ENCODE measurements at regions of chr5 and their contacts with region 1.

Region 1: DNA sequence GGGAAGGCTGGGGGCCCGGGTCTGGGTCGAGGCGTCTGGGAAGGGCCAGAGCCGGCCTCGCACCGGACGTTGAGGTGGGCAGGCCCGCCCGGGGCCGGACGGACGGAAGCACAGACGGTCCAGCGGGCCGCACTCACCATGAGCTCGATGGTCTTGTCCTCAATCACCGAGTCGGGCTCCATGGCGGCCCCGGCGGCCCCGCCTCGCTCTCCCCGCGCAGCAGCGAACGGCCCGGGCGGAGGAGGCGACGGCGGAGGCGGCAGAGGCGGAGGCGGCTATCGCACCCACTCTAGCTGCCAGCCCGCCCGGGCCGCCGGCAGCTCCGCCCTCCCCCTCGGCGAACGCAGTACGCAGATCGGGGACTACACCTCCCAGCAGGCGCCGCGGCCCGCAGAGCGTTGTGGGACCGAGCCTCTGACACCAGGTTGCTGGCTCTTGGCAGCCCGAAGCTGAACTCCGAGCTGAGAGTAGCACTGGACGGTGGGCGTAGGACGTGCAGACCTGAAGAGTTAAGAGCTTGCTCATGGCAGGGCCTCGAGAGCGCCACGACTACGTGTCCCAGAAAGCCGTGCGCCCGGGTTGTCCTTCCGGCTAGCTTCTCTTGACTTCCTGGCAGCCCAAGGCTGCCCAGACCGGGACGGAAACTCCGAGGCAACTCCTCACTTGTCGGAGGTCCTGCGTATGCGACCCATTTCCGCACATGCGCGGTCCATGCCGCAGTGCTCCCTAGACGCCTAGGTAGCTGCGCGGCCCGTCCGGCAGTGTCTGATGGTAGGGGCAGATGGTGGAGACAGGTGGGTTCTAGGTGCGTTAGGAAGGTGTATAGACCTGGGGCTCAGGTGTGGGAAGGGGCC is at the start of gene FBXW11:
- DNase-seq: peak; percentile 98
- H3K4me3 Mint-ChIP-seq: peak within 1 kb of the TSS; percentile 99
- H3K27ac Mint-ChIP-seq: peak within 1 kb of the TSS; percentile 99
- H3K4me1 Mint-ChIP-seq: peaks cover 46% of the 10 kb centered on the region
- H3K27me3 Mint-ChIP-seq: no peaks in the 10 kb centered on the region
- total RNA-seq, gene FBXW11: 53.3 and 54.4 TPM in 2 replicates

Region 2: DNA sequence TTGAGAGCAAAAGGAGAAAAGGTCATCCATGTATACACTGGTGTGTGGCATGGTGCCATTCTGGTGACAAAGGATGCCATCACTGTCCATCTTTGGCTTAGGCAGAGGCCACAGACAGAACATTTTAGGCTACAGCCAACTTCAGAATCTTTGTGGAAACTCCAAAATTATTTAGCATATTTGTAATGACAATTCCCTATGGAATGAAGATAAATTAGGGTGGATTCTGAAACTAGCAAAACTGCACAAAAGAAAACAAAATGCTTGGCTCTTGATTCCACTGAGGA is 92.6 kb before region 1 on chr5:
- intact Hi-C with region 1: loop called (anchors 1 kb)
- DNase-seq: no peak
- H3K4me3 Mint-ChIP-seq: no peak overlapping the region
- H3K27ac Mint-ChIP-seq: no peak overlapping the region
- H3K4me1 Mint-ChIP-seq: peaks cover 21% of the 10 kb centered on the region
- H3K27me3 Mint-ChIP-seq: no peaks in the 10 kb centered on the region

Region 3: DNA sequence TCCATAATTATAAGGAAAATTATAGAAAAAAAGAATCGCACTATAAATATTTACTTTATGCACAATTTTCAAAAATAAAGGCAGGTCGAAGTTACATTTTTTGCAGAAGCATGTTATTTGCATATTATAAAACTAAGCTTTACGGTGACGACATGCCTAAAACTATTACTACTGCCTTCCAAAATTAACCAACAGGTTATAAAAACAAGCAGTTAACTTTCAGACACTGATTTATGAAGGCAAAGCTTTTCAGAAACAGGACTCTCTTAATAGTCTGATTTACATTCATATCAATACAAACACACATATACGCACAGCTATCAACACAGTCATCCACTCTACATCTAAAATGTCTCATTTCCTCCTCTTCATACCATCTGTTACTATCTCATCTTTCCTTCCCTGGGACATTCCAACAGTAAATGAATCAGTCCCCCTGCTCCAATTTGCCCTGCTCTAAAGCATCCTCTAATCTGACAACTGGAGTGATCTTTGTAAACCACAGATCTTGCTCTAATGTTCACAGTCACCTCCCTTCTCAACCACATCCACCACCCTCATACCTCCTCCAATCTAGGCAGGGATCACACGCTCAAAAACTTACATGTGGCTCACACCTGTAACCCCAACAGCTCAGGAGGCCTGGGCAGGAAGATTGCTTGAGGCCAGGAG is 21.7 kb before region 1 on chr5:
- intact Hi-C with region 1: loop called (anchors 1 kb)
- DNase-seq: peak; percentile 79
- H3K4me3 Mint-ChIP-seq: no peak overlapping the region
- H3K27ac Mint-ChIP-seq: peak overlapping the region; percentile 30
- H3K4me1 Mint-ChIP-seq: peaks cover 34% of the 10 kb centered on the region
- H3K27me3 Mint-ChIP-seq: no peaks in the 10 kb centered on the region

Region 4: DNA sequence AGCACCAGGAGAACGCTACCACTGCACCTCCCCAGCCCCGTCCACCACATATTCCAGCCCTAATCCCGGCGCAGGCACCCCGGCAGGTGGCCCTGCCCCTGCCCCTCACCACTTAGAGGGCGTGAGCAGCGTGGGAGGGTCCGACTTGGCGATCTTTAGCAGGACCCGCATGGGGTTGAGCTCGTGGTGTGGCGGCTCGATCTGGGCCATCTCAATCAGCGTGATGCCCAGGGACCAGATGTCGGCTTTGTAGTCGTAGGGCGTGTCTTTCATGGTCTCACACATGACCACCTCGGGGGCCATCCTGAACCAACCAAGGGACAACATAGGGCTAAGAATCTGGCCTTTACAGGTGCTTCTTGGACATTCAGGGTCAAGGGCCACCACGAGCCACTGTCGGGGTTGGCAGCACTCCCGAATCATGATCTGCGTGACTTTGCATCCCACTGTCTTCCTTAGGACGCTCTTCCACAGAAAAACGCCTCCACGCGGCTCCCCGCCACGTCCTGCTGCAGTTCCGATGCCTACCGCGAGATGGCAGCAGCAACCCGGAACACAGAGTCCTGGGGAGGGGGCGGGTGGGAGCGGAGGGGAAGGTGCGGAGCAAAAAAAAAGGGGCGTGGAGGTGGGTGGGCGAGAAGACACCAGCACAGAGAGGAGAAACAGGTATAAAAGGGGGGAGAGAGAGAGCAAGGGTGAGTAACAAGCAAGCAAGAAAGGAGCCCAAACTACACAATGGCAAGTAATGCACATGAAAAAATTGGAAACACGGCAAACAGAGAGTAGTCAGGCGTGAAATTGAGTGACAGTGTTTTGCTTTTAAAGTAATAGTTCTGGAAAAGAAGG is 100.2 kb after region 1 on chr5:
- intact Hi-C with region 1: loop called (anchors 1 kb)
- DNase-seq: peak; percentile 91
- H3K4me3 Mint-ChIP-seq: no peak overlapping the region
- H3K27ac Mint-ChIP-seq: peak overlapping the region; percentile 75
- H3K4me1 Mint-ChIP-seq: peaks cover 51% of the 10 kb centered on the region
- H3K27me3 Mint-ChIP-seq: no peaks in the 10 kb centered on the region

Region 5: DNA sequence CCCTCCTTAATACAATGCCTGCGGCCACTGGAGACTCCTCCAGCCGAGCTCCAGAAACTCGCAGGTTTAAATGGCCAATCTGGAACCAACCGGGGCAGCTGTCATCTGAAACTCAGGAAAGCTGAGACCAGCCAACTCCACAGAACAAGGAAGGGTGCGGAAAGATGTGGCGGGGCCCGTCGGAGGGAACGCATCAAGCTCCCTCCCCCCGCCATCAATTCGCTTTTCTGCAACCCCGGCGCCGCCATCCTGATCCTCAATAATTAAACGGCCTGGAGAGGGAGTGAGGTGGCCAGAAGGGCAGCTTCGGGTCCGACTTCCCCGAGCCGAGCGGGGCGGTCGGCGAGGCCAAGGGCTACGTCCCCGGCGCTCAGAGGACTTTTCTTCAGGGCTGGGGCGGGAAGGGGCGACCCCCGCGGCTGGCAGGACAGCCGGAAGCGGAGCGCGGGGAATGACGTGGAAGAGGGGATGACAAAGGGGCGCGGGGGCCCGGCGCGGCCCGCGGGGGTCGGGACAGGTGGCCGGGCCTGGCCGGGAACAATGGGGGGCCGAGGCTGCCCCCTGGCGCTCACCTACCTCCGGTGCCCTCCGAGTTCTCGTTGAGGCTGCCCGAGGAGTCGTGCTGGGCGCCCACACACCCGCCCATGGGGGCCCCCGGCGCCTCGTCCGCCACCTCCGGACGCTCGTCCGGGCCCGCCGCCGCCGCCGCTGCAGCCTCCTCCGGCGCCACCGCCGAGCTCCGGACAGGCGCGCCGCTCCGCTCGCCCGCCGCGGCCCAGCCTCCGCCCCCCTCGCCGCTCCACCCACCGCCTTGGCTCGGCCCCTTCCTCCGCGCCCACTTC is 276.7 kb after region 1 on chr5 and contains the start of gene UBTD2:
- intact Hi-C with region 1: loop called (anchors 2 kb)
- DNase-seq: peak; percentile 95
- H3K4me3 Mint-ChIP-seq: peak within 1 kb of the TSS; percentile 89
- H3K27ac Mint-ChIP-seq: peak within 1 kb of the TSS; percentile 81
- H3K4me1 Mint-ChIP-seq: peaks cover 23% of the 10 kb centered on the region
- H3K27me3 Mint-ChIP-seq: peaks cover 25% of the 10 kb centered on the region
- total RNA-seq, gene UBTD2: 5.5 and 6.3 TPM in 2 replicates

Measured in activated CD4-positive, alpha-beta T cell treated with anti-CD3 and anti-CD28 coated beads, Interleukin-2, amount 10 ng/mL, durations not matched to agents 24 days and 14 days (primary cell).